ENCODE measurements at regions of chr15 and their contacts with region 1.

Region 1: GRCh38 chr15:74382004-74382816 is 14.8 kb upstream of the CYP11A1 start:
- DNase-seq: peak; percentile 46 to 88
- H3K4me3 ChIP-seq: no peak overlapping the region
- H3K27ac ChIP-seq: no peak overlapping the region
- H3K4me1 ChIP-seq: peaks cover 0 to 5% of the 10 kb centered on the region in 2 donors
- H3K27me3 ChIP-seq: no peaks in the 10 kb centered on the region
- CTCF ChIP-seq: peak; percentile 79 to 94 (median 90)

Region 2: GRCh38 chr15:74438721-74439316 is 56.6 kb after region 1 on chr15:
- intact Hi-C with region 1: loop called (anchors 1 kb)
- DNase-seq: peak in 1 of 2 donors; percentile 80
- H3K4me3 ChIP-seq: no peak overlapping the region
- H3K27ac ChIP-seq: no peak overlapping the region
- H3K4me1 ChIP-seq: peaks cover 0 to 6% of the 10 kb centered on the region in 2 donors
- H3K27me3 ChIP-seq: no peaks in the 10 kb centered on the region
- CTCF ChIP-seq: peak; percentile 79 to 89 (median 87)